ENCODE measurements at regions of chr9 and their contacts with region 1.

Region 1: DNA sequence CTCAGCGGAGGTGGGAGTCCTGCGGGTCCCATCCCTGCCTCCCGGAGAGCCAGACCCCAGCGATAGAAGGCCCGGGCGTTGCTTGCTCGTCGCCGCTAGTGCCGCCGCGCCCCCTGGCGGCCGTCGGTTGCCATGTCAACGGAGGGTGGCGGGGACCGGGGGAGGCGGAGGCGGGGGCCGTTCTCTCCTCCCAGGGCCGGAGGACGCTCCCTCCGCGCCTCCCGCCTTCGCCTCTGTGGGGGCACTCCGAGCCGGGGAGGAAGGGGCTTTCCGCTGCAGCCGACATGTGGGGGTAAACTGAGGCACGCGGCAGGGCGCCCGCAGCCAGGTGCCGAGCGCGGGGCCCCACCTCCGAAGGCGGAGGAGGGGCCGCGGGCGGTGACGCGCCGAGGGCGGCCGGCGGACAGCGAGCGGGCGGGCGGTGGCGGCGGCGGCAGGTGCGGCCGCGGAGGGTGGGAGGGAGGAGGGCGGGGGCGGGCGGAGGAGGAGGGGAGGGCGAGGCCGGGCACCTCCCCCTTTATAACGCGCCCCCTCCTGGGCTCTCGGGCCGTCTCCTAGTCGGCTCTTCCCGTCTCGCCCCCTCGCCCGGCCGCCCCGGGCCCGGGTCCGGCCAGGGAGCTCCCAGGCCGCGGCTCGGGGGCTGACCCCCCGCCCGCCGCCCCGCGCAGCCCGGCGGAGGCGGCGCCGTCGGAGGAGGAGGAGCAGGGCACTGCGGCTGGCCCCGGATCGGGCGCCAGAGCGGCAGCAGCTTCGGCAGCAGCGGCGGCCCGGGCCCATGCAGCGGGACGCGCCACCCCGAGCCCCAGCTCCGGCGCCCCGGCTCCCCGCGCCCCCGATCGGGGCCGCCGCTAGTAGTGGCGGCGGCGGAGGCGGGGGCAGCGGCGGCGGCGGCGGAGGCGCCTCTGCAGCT is 556 bp upstream of the CDK9 start:
- DNase-seq: peak; percentile 89 to 93 (median 90)
- H3K4me3 ChIP-seq: peak overlapping the region in 1 of 2 donors; percentile 61
- H3K4me3 Mint-ChIP-seq: peak overlapping the region; percentile 80 to 93 (median 86)
- H3K27ac ChIP-seq: peak overlapping the region; percentile 86
- H3K27ac Mint-ChIP-seq: peak overlapping the region; percentile 93 to 99 (median 97)
- H3K4me1 ChIP-seq: peaks cover 68% of the 10 kb centered on the region
- H3K4me1 Mint-ChIP-seq: peaks cover 34 to 74% (median 49%) of the 10 kb centered on the region in 4 donors
- H3K27me3 ChIP-seq: no peaks in the 10 kb centered on the region
- H3K27me3 Mint-ChIP-seq: no peaks in the 10 kb centered on the region

Region 2: DNA sequence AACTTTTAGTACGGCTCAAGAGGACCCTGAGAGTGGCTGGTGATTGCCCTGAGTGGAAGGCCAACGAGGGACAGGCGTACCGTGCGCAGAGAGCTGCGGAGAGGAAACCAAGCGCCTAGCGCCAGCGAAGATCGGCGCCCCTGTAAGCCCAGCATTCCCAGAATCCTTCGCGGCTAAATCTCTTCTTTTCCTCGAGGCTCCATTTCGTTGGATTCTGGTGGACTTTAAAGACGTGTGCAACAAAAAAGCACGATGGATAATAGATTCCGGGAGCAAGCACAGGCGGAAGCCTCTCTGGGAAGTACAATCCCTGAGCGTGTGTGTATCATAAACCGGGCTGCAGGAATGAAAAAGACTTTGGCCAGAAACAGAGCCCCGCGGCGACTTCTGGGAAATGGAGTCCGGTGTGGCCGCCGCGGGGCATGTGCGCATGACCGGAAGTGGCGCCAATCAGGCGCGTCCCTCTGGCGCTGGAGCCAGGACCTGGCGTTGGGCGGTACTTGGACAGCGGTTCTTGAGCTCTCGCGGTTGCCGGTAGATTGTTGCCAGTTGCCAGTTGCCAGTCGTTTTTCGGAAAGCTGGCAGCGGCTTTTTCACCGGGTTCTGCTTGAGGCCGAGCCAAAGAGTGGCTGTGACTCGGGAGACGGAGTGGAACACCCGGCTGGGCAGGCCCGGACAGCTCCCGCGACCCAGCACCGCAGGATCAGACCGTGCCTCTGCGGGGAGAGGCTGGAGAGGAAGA is 361.2 kb before region 1 on chr9 and contains the start of gene ZNF79:
- CTCF ChIA-PET with region 1: no interaction called
- POLR2A ChIA-PET with region 1: no interaction called
- intact Hi-C with region 1: loop called (anchors 1 kb)
- DNase-seq: peak; percentile 87 to 90 (median 89)
- H3K4me3 ChIP-seq: peak within 1 kb of the TSS; percentile 87 to 92
- H3K4me3 Mint-ChIP-seq: peak within 1 kb of the TSS; percentile 97 to 100 (median 99)
- H3K27ac ChIP-seq: peak within 1 kb of the TSS; percentile 80
- H3K27ac Mint-ChIP-seq: peak within 1 kb of the TSS; percentile 94 to 99 (median 96)
- H3K4me1 ChIP-seq: peaks cover 46% of the 10 kb centered on the region
- H3K4me1 Mint-ChIP-seq: peaks cover 20 to 60% (median 38%) of the 10 kb centered on the region in 4 donors
- H3K27me3 ChIP-seq: no peaks in the 10 kb centered on the region
- H3K27me3 Mint-ChIP-seq: no peaks in the 10 kb centered on the region
- total RNA-seq, gene ZNF79: 22.2 to 22.5 TPM

Region 3: DNA sequence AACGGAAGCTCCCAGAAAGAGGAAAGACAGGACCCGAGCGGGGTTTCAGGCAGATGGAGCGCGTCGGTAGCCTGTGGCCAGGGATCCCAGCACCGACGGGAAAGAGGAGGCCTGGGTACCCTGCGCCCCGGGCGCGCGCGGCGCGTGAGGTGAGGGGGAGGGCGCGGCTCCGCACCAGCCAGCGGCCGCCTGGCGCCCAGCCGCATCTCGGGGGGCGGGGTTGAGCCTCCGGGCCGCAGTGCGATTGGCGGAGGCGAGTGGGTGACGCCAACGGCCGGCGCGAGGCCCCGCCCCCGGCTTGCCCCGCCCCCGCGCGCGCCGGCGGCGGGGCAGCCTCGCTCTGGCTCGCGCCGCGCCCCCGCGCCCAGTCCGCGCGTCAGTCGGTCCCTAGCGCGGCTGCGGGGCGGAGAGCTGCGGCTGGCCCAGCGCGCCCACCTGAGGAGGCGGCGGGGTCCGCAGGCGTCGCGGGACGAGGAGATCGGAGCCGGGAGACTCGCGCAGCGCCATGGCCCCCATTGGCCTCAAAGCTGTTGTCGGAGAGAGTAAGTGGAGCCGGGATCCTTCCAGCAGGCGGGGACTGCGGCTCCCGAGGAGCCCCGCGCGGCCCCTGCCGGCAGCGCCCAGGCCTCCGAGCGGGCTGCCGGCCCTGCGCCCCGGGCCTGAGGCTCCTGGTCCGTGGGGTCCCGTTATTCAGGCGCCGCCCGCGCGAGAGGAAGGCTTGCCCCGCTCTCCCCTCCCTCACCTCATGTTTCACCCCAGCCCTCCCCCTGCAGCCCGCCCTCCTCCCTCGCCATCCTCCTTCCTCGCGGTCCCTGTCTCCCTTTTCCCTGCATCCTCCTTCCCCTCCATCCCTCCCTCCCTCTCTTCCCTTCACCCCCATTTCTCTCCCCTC is 173.1 kb before region 1 on chr9 and contains the start of gene STXBP1:
- CTCF ChIA-PET with region 1: no interaction called
- POLR2A ChIA-PET with region 1: interaction called, 8 read pairs
- intact Hi-C with region 1: loop called (anchors 1 kb)
- DNase-seq: peak; percentile 81 to 88 (median 85)
- H3K4me3 ChIP-seq: peak within 1 kb of the TSS; percentile 54 to 74
- H3K4me3 Mint-ChIP-seq: peak within 1 kb of the TSS; percentile 88 to 98 (median 96)
- H3K27ac ChIP-seq: peak within 1 kb of the TSS; percentile 24
- H3K27ac Mint-ChIP-seq: peak within 1 kb of the TSS; percentile 59 to 93 (median 87)
- H3K4me1 ChIP-seq: peaks cover 32% of the 10 kb centered on the region
- H3K4me1 Mint-ChIP-seq: peaks cover 23 to 45% (median 32%) of the 10 kb centered on the region in 4 donors
- H3K27me3 ChIP-seq: peaks cover 4% of the 10 kb centered on the region
- H3K27me3 Mint-ChIP-seq: peaks cover 5 to 14% of the 10 kb centered on the region in 2 donors
- total RNA-seq, gene STXBP1: 19.9 to 20.9 TPM

Region 4: GRCh38 chr9:127770905-127771569 is 14.2 kb before region 1 on chr9:
- CTCF ChIA-PET with region 1: interaction called, 128 read pairs
- POLR2A ChIA-PET with region 1: interaction called, 377 read pairs
- intact Hi-C with region 1: loop called (anchors 1 kb)
- DNase-seq: peak; percentile 92 to 96 (median 95)
- H3K4me3 ChIP-seq: peak overlapping the region; percentile 50 to 78
- H3K4me3 Mint-ChIP-seq: peak overlapping the region; percentile 78 to 92 (median 88)
- H3K27ac ChIP-seq: peak overlapping the region; percentile 97
- H3K27ac Mint-ChIP-seq: peak overlapping the region; percentile 92 to 99 (median 98)
- H3K4me1 ChIP-seq: peaks cover 91% of the 10 kb centered on the region
- H3K4me1 Mint-ChIP-seq: peaks cover 41 to 78% (median 61%) of the 10 kb centered on the region in 4 donors
- H3K27me3 ChIP-seq: no peaks in the 10 kb centered on the region
- H3K27me3 Mint-ChIP-seq: no peaks in the 10 kb centered on the region

Region 5: GRCh38 chr9:127847155-127847463 is 61.8 kb after region 1 on chr9:
- CTCF ChIA-PET with region 1: no interaction called
- POLR2A ChIA-PET with region 1: no interaction called
- intact Hi-C with region 1: no loop called
- DNase-seq: no peak
- H3K4me3 ChIP-seq: no peak overlapping the region
- H3K4me3 Mint-ChIP-seq: no peak overlapping the region
- H3K27ac ChIP-seq: no peak overlapping the region
- H3K27ac Mint-ChIP-seq: no peak overlapping the region
- H3K4me1 ChIP-seq: peaks cover 4% of the 10 kb centered on the region
- H3K4me1 Mint-ChIP-seq: peaks cover 2 to 8% (median 5%) of the 10 kb centered on the region in 4 donors
- H3K27me3 ChIP-seq: no peaks in the 10 kb centered on the region
- H3K27me3 Mint-ChIP-seq: no peaks in the 10 kb centered on the region

Region 6: GRCh38 chr9:127862075-127863011 is 77.1 kb after region 1 on chr9:
- CTCF ChIA-PET with region 1: interaction called, 4 read pairs
- POLR2A ChIA-PET with region 1: interaction called, 22 read pairs
- intact Hi-C with region 1: no loop called
- DNase-seq: peak; percentile 35 to 68 (median 45)
- H3K4me3 ChIP-seq: no peak overlapping the region
- H3K4me3 Mint-ChIP-seq: peak overlapping the region in 7 of 8 donors; percentile 5 to 79 (median 52)
- H3K27ac ChIP-seq: peak overlapping the region; percentile 59
- H3K27ac Mint-ChIP-seq: peak overlapping the region; percentile 87 to 97 (median 91)
- H3K4me1 ChIP-seq: peaks cover 45% of the 10 kb centered on the region
- H3K4me1 Mint-ChIP-seq: peaks cover 31 to 54% (median 39%) of the 10 kb centered on the region in 4 donors
- H3K27me3 ChIP-seq: no peaks in the 10 kb centered on the region
- H3K27me3 Mint-ChIP-seq: no peaks in the 10 kb centered on the region

Region 7: GRCh38 chr9:127916665-127917613 is 131.7 kb after region 1 on chr9 and contains the start of gene ST6GALNAC4:
- CTCF ChIA-PET with region 1: interaction called, 9 read pairs
- POLR2A ChIA-PET with region 1: interaction called, 22 read pairs
- intact Hi-C with region 1: loop called (anchors 1 kb)
- DNase-seq: peak; percentile 90 to 93 (median 91)
- H3K4me3 ChIP-seq: peak within 1 kb of the TSS; percentile 66 to 76
- H3K4me3 Mint-ChIP-seq: peak within 1 kb of the TSS; percentile 78 to 88 (median 84)
- H3K27ac ChIP-seq: peak within 1 kb of the TSS; percentile 52
- H3K27ac Mint-ChIP-seq: peak within 1 kb of the TSS; percentile 63 to 84 (median 79)
- H3K4me1 ChIP-seq: peaks cover 38% of the 10 kb centered on the region
- H3K4me1 Mint-ChIP-seq: peaks cover 12 to 65% (median 39%) of the 10 kb centered on the region in 4 donors
- H3K27me3 ChIP-seq: no peaks in the 10 kb centered on the region
- H3K27me3 Mint-ChIP-seq: no peaks in the 10 kb centered on the region
- total RNA-seq, gene ST6GALNAC4: 35.7 to 38.1 TPM

Measured in CD4-positive, alpha-beta memory T cell (primary cell).